H1 (cell line): ENCODE measurements at regions of chr15 and their contacts with region 1.

Region 1: GRCh38 chr15:81265944-81266775 is 57.8 kb downstream of the STARD5 start:
- DNase-seq: peak; percentile 70 to 93
- H3K4me3 ChIP-seq: peak overlapping the region in 3 of 4 experiments; percentile 7 to 51 (median 16); a peak in 3 of 8 replicates
- H3K27ac ChIP-seq: no peak overlapping the region
- H3K4me1 ChIP-seq: peaks cover 0 to 5% (median 1%) of the 10 kb centered on the region in 4 experiments; a peak in 2 of 7 replicates
- H3K27me3 ChIP-seq: peaks cover 0 to 2% (median 0%) of the 10 kb centered on the region in 4 experiments; a peak in 2 of 7 replicates
- CTCF ChIP-seq: peak; percentile 92 to 98 (median 94)
- EP300 ChIP-seq: no peak
- POLR2A ChIP-seq: no peak
- RAD21 ChIP-seq: peak; percentile 94 to 95

Region 2: DNA sequence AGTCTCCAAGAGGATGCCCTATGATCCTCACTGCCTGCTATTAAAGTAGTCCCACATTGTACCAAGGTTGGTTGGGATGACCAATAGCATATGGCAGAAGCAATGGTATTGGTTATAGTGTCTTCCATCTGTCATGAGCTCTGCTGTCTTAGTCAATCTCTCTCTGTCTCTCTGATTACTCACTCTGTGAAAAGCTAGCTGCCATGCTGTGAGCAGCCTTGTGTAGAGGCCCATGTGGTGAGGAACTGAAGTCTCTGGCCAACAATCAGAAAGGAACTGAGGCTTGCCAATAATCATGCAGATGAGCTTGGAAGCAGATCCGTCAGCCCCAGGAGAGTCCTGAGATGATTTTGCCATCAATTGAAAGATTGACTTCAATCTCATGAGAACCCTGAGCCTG is 192.4 kb before region 1 on chr15:
- CTCF ChIA-PET with region 1: interaction called, 11 read pairs
- POLR2A ChIA-PET with region 1: no interaction called
- DNase-seq: peak in 1 of 2 experiments; percentile 7
- H3K4me3 ChIP-seq: no peak overlapping the region
- H3K27ac ChIP-seq: no peak overlapping the region
- H3K4me1 ChIP-seq: no peaks in the 10 kb centered on the region
- H3K27me3 ChIP-seq: no peaks in the 10 kb centered on the region
- CTCF ChIP-seq: no peak
- EP300 ChIP-seq: no peak
- POLR2A ChIP-seq: no peak
- RAD21 ChIP-seq: no peak

Region 3: DNA sequence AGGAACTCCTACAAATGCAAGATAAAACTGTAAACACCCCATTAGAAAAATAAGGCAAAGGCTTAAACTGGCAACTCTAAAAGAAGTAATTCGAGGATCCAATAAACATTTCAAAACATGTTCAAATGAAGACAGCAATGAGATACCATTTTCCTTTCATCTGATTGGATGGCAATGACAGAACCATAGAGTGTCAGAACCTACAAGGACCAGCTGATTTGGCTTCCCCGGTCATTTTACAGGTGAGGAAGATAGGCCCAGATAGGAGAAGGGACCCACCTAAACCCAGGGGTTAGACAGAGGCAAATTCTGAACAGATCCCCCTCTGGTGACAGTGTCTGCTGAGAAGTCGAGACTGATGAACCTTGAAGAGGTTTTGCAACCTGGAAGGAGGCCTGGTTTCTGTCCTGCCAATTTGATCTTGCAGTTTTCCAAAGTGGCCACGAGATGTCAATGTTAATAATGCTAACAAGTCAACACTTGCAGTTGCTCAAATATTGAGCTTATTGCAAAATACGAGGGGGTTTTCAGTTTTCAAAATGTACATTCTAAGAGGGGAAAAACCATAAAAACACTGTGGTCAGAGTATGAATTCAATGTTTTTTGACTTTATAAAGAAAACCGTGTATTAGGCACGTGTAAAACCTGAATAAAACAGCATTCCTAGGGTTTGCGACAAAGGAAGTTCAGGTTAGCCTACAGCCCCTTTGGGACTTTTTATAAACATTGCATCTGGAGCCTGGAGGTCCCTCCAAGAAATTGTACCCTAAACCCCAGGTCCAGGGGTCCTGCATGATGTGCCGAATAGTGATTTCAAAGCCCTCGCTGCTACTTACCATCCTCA is 110.6 kb before region 1 on chr15:
- CTCF ChIA-PET with region 1: interaction called, 162 read pairs
- POLR2A ChIA-PET with region 1: no interaction called
- DNase-seq: no peak
- H3K4me3 ChIP-seq: no peak overlapping the region
- H3K27ac ChIP-seq: no peak overlapping the region
- H3K4me1 ChIP-seq: no peaks in the 10 kb centered on the region
- H3K27me3 ChIP-seq: no peaks in the 10 kb centered on the region
- CTCF ChIP-seq: peak in 2 of 3 experiments; percentile 47 to 48; a peak in 2 of 4 replicates
- EP300 ChIP-seq: no peak
- POLR2A ChIP-seq: no peak
- RAD21 ChIP-seq: peak; percentile 54 to 65

Region 4: GRCh38 chr15:81195339-81195864 is 70.8 kb before region 1 on chr15:
- CTCF ChIA-PET with region 1: interaction called, 46 read pairs
- POLR2A ChIA-PET with region 1: no interaction called
- DNase-seq: no peak
- H3K4me3 ChIP-seq: no peak overlapping the region
- H3K27ac ChIP-seq: no peak overlapping the region
- H3K4me1 ChIP-seq: no peaks in the 10 kb centered on the region
- H3K27me3 ChIP-seq: no peaks in the 10 kb centered on the region
- CTCF ChIP-seq: no peak
- EP300 ChIP-seq: no peak
- POLR2A ChIP-seq: no peak
- RAD21 ChIP-seq: no peak

Region 5: GRCh38 chr15:81308260-81308659 is 42.1 kb after region 1 on chr15:
- CTCF ChIA-PET with region 1: interaction called, 19 read pairs
- POLR2A ChIA-PET with region 1: no interaction called
- DNase-seq: no peak
- H3K4me3 ChIP-seq: no peak overlapping the region
- H3K27ac ChIP-seq: no peak overlapping the region
- H3K4me1 ChIP-seq: peaks cover 6 to 10% (median 8%) of the 10 kb centered on the region in 4 experiments
- H3K27me3 ChIP-seq: no peaks in the 10 kb centered on the region
- CTCF ChIP-seq: no peak
- EP300 ChIP-seq: no peak
- POLR2A ChIP-seq: no peak
- RAD21 ChIP-seq: no peak

Region 6: GRCh38 chr15:81394603-81395002 is 128.4 kb after region 1 on chr15:
- CTCF ChIA-PET with region 1: interaction called, 94 read pairs
- POLR2A ChIA-PET with region 1: no interaction called
- DNase-seq: no peak
- H3K4me3 ChIP-seq: no peak overlapping the region
- H3K27ac ChIP-seq: no peak overlapping the region
- H3K4me1 ChIP-seq: no peaks in the 10 kb centered on the region
- H3K27me3 ChIP-seq: no peaks in the 10 kb centered on the region
- CTCF ChIP-seq: no peak
- EP300 ChIP-seq: no peak
- POLR2A ChIP-seq: no peak
- RAD21 ChIP-seq: no peak